Mammary epithelial cell (primary cell): ENCODE measurements at regions of chr20 and their contacts with region 1.

Region 1: GRCh38 chr20:47272893-47273590 is 83.5 kb downstream of the ZMYND8 start:
- DNase-seq: peak; percentile 60
- H3K4me3 ChIP-seq: no peak overlapping the region
- H3K27ac ChIP-seq: peak overlapping the region; percentile 94
- H3K4me1 ChIP-seq: peaks cover 39% of the 10 kb centered on the region
- H3K27me3 ChIP-seq: no peaks in the 10 kb centered on the region
- CTCF ChIP-seq: peak; percentile 88 to 93

Region 2: DNA sequence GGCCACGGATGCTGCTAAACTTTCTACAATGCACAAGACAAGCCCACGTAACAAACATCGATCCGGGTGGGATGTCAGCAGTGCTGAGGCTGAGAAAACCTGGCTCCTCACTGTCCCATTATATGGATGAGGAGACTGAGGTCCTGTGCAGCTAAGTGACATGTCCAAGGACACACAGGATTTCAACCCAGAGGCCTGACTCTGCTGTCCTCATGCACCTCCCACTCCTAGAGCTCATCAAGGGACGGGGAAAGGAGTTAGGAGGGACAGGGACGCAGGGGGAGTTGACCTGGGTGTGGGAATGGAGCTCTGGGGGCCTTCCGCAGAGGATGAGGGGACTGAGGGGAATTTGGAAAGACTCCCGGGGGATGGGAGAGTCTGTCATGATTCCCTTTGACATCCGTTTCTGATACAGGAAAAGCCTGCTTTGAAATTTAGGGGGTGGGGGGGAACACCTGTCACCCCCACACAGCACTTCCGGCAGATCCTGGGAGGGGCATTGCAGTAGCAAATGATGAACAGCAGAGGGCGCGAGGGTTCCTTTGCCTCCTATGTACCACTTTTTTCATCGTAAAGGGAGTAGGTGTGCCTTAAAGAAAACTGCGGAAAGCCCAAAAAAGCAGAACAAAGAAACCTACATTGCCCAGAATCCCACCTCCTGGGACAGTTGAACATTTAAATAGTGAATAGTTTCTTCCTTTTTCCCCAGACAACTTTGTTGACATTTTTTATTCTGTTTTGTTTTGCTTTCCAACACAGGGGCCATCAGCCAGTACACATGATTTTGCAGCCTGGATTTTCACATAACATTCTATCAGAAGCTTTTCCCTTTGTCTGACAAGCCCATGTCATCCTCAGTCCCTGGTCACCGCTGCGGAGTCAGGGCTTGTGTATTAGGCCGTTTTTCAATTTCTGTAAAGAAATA is 515.0 kb before region 1 on chr20:
- CTCF ChIA-PET with region 1: no interaction called
- dilution Hi-C with region 1: no loop called
- in situ Hi-C with region 1: no loop called
- intact Hi-C with region 1: loop called (anchors 2 kb)
- DNase-seq: peak; percentile 38
- H3K4me3 ChIP-seq: no peak overlapping the region
- H3K27ac ChIP-seq: no peak overlapping the region
- H3K4me1 ChIP-seq: no peaks in the 10 kb centered on the region
- H3K27me3 ChIP-seq: no peaks in the 10 kb centered on the region
- CTCF ChIP-seq: peak; percentile 92 to 97

Region 3: GRCh38 chr20:47213966-47214365 is 59.1 kb before region 1 on chr20:
- CTCF ChIA-PET with region 1: interaction called, 19 read pairs
- dilution Hi-C with region 1: loop called (anchors 5 kb)
- in situ Hi-C with region 1: no loop called
- intact Hi-C with region 1: no loop called
- DNase-seq: no peak
- H3K4me3 ChIP-seq: no peak overlapping the region
- H3K27ac ChIP-seq: no peak overlapping the region
- H3K4me1 ChIP-seq: no peaks in the 10 kb centered on the region
- H3K27me3 ChIP-seq: no peaks in the 10 kb centered on the region
- CTCF ChIP-seq: no peak

Region 4: GRCh38 chr20:47317127-47317895 is 44.3 kb after region 1 on chr20:
- CTCF ChIA-PET with region 1: no interaction called
- dilution Hi-C with region 1: no loop called
- in situ Hi-C with region 1: no loop called
- intact Hi-C with region 1: loop called (anchors 5 kb)
- DNase-seq: peak; percentile 100
- H3K4me3 ChIP-seq: no peak overlapping the region
- H3K27ac ChIP-seq: peak overlapping the region; percentile 95
- H3K4me1 ChIP-seq: peaks cover 69% of the 10 kb centered on the region
- H3K27me3 ChIP-seq: no peaks in the 10 kb centered on the region
- CTCF ChIP-seq: no peak

Region 5: GRCh38 chr20:47379433-47380150 is 106.5 kb after region 1 on chr20:
- CTCF ChIA-PET with region 1: interaction called, 9 read pairs
- dilution Hi-C with region 1: loop called (anchors 5 kb)
- in situ Hi-C with region 1: loop called (anchors 5 to 10 kb)
- intact Hi-C with region 1: loop called (anchors 1 kb)
- DNase-seq: no peak
- H3K4me3 ChIP-seq: no peak overlapping the region
- H3K27ac ChIP-seq: no peak overlapping the region
- H3K4me1 ChIP-seq: peaks cover 16% of the 10 kb centered on the region
- H3K27me3 ChIP-seq: no peaks in the 10 kb centered on the region
- CTCF ChIP-seq: no peak

Region 6: GRCh38 chr20:47453142-47453782 is 180.2 kb after region 1 on chr20:
- CTCF ChIA-PET with region 1: no interaction called
- dilution Hi-C with region 1: no loop called
- in situ Hi-C with region 1: no loop called
- intact Hi-C with region 1: loop called (anchors 10 kb)
- DNase-seq: peak; percentile 95
- H3K4me3 ChIP-seq: no peak overlapping the region
- H3K27ac ChIP-seq: peak overlapping the region; percentile 99
- H3K4me1 ChIP-seq: peaks cover 35% of the 10 kb centered on the region
- H3K27me3 ChIP-seq: no peaks in the 10 kb centered on the region
- CTCF ChIP-seq: no peak

Region 7: DNA sequence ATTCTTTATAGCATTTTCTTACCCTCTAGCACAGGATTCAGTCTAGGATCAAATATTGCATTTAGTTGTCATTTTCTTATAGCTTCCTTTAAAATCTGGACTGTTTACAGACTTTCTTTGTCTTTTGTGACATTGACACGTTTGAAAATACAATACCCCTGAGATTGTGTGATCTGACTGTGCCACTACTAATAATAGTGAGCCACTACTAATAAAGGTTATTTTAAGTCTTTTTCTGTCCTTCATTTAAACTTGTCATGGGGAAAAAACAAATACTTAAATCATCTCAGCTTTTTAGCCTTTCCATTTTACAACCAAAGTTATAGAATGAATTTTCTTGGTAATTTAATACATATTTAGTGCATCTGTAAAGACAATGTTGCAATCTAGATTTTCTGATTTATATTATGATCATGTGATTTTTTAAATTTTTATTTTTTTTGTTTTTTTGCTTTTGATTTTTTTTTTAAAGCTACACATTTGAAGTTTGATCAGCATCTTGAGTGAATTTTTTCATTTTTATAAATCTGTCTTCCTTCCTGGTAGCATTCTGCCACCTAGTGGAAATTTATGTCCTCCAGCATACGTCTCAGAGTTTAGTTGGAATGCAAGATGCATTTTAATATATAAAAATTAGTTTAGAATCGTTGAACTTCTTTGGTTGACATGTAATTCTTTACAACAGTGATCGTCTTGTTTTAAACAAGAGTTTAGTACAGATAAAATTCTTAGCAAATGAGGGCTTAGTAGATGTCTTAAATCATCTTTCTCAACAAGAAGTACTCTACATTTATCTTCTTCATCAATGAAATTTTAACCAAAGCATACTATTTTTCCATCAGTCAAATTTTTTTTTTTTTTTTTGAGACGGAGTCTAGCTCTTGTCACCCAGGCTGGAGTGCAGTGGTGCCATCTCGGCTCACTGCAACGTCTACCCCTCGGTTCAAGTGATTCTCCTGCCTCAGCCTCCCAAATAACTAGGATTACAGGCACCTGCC is 348.1 kb after region 1 on chr20:
- CTCF ChIA-PET with region 1: interaction called, 24 read pairs
- dilution Hi-C with region 1: no loop called
- in situ Hi-C with region 1: loop called in 1 of 2 experiments (anchors 25 kb)
- intact Hi-C with region 1: loop called (anchors 1 kb)
- DNase-seq: peak; percentile 36
- H3K4me3 ChIP-seq: no peak overlapping the region
- H3K27ac ChIP-seq: no peak overlapping the region
- H3K4me1 ChIP-seq: no peaks in the 10 kb centered on the region
- H3K27me3 ChIP-seq: no peaks in the 10 kb centered on the region
- CTCF ChIP-seq: peak; percentile 78 to 85